B cell (primary cell): ENCODE measurements at regions of chr1 and their contacts with region 1.

Region 1: GRCh38 chr1:116020668-116021275 is 44.5 kb downstream of the SLC22A15 start:
- DNase-seq: peak; percentile 54
- ATAC-seq: peak; percentile 54
- H3K4me3 ChIP-seq: no peak overlapping the region
- H3K4me3 Mint-ChIP-seq: no peak overlapping the region
- H3K27ac ChIP-seq: no peak overlapping the region
- H3K27ac Mint-ChIP-seq: no peak overlapping the region
- H3K4me1 ChIP-seq: no peaks in the 10 kb centered on the region
- H3K4me1 Mint-ChIP-seq: peaks cover 2% of the 10 kb centered on the region
- H3K27me3 ChIP-seq: no peaks in the 10 kb centered on the region
- H3K27me3 Mint-ChIP-seq: no peaks in the 10 kb centered on the region
- CTCF ChIP-seq: peak; percentile 76

Region 2: DNA sequence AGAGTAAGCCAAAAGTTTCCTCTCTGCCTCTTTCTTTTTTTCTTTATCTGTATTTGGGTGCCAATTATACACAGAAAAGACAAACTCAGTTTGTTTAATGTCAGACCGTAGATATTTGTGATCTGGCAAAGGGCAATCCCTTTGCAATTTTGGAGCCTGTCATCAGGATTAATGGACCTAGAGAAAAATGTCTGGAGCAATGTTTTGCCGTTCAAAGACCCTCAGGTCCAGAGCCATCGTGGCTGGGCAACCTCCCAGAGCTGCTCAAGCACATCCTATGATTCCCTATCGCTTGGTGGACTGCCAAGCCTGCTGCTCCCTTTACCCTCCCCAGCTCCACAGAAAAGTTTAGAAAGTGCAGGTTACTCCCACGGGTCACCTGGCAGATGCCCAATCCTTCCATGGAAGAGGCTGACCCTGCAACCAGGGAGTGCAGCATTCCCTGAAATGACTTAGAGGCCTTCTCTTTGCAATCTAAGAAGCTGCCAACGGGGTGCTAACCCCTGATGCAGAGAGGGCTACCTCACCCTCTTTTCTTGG is 570.2 kb before region 1 on chr1:
- CTCF ChIA-PET with region 1: no interaction called
- POLR2A ChIA-PET with region 1: no interaction called
- intact Hi-C with region 1: no loop called
- DNase-seq: no peak
- ATAC-seq: no peak
- H3K4me3 ChIP-seq: no peak overlapping the region
- H3K4me3 Mint-ChIP-seq: no peak overlapping the region
- H3K27ac ChIP-seq: no peak overlapping the region
- H3K27ac Mint-ChIP-seq: no peak overlapping the region
- H3K4me1 ChIP-seq: no peaks in the 10 kb centered on the region
- H3K4me1 Mint-ChIP-seq: no peaks in the 10 kb centered on the region
- H3K27me3 ChIP-seq: no peaks in the 10 kb centered on the region
- H3K27me3 Mint-ChIP-seq: no peaks in the 10 kb centered on the region
- CTCF ChIP-seq: no peak

Region 3: DNA sequence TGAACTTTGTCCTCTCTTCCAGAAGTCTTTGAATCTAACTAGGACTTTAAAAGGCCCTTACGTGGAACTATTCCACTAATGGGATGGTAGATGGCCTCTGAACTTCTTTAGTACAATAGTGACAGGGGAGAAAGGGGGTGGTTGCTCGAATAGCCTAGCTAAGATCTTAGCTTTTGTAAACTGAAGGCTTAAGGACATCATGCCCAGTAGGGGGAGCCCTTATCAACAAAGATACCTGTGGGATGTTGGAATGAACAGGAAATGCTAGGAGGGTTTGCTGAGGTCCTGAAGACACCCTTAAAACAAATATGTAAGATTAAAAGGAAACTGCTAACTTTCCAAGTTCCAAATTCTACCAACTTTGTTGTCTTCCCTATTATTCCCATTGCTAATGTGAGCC is 213.0 kb before region 1 on chr1:
- CTCF ChIA-PET with region 1: interaction called, 22 read pairs
- POLR2A ChIA-PET with region 1: no interaction called
- intact Hi-C with region 1: loop called (anchors 2 kb)
- DNase-seq: peak; percentile 52
- ATAC-seq: no peak
- H3K4me3 ChIP-seq: no peak overlapping the region
- H3K4me3 Mint-ChIP-seq: no peak overlapping the region
- H3K27ac ChIP-seq: no peak overlapping the region
- H3K27ac Mint-ChIP-seq: no peak overlapping the region
- H3K4me1 ChIP-seq: no peaks in the 10 kb centered on the region
- H3K4me1 Mint-ChIP-seq: no peaks in the 10 kb centered on the region
- H3K27me3 ChIP-seq: no peaks in the 10 kb centered on the region
- H3K27me3 Mint-ChIP-seq: peaks cover 13% of the 10 kb centered on the region
- CTCF ChIP-seq: peak; percentile 73

Region 4: DNA sequence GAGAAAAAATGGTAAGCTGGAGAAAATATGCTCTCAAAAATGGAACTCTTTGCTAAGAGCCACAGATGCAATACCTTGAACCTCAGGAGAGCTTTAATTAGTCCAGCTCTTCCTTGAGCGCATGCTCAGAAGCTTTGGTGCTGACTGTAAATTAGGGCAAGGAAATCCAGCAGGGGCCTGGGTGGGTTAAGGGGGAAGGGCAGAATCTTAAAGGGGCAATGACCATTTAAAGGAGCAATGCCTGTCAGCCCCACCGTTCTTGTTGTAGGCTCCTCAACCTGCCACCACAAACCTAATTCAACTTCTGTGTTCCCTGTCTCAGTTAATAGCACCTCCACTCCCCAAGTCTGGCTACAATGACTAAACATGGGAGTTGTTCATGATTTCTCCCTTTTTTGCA is 51.3 kb before region 1 on chr1:
- CTCF ChIA-PET with region 1: no interaction called
- POLR2A ChIA-PET with region 1: no interaction called
- intact Hi-C with region 1: no loop called
- DNase-seq: no peak
- ATAC-seq: no peak
- H3K4me3 ChIP-seq: no peak overlapping the region
- H3K4me3 Mint-ChIP-seq: no peak overlapping the region
- H3K27ac ChIP-seq: no peak overlapping the region
- H3K27ac Mint-ChIP-seq: no peak overlapping the region
- H3K4me1 ChIP-seq: no peaks in the 10 kb centered on the region
- H3K4me1 Mint-ChIP-seq: no peaks in the 10 kb centered on the region
- H3K27me3 ChIP-seq: peaks cover 0 to 9% (median 3%) of the 10 kb centered on the region in 4 experiments
- H3K27me3 Mint-ChIP-seq: peaks cover 25% of the 10 kb centered on the region
- CTCF ChIP-seq: no peak

Region 5: GRCh38 chr1:116001739-116002487 is 18.9 kb before region 1 on chr1:
- CTCF ChIA-PET with region 1: interaction called, 10 read pairs
- POLR2A ChIA-PET with region 1: no interaction called
- intact Hi-C with region 1: no loop called
- DNase-seq: no peak
- ATAC-seq: no peak
- H3K4me3 ChIP-seq: no peak overlapping the region
- H3K4me3 Mint-ChIP-seq: no peak overlapping the region
- H3K27ac ChIP-seq: no peak overlapping the region
- H3K27ac Mint-ChIP-seq: no peak overlapping the region
- H3K4me1 ChIP-seq: peaks cover 11 to 26% of the 10 kb centered on the region in 2 donors
- H3K4me1 Mint-ChIP-seq: peaks cover 20% of the 10 kb centered on the region
- H3K27me3 ChIP-seq: no peaks in the 10 kb centered on the region
- H3K27me3 Mint-ChIP-seq: no peaks in the 10 kb centered on the region
- CTCF ChIP-seq: no peak

Region 6: DNA sequence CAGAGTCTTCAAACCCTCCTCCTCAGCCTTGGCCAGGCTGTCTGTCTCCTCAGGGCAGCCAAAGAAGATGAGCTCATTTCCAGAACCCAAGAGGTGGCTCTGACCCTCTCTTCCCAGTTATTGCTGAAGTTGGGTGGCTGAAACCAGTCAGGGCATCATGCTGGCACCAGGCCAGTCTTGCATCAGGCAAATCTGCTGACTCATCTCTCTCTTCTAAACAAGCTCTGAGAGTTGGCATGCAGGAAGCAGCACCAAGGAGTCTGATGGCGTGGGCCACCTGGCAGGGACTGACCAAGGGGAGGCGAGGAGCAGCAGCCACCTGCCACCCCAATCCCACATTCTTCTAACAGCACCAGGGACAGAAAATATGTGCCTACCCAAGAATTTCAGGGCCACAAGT is 247.4 kb after region 1 on chr1:
- CTCF ChIA-PET with region 1: no interaction called
- POLR2A ChIA-PET with region 1: no interaction called
- intact Hi-C with region 1: no loop called
- DNase-seq: no peak
- ATAC-seq: no peak
- H3K4me3 ChIP-seq: no peak overlapping the region
- H3K4me3 Mint-ChIP-seq: no peak overlapping the region
- H3K27ac ChIP-seq: no peak overlapping the region
- H3K27ac Mint-ChIP-seq: no peak overlapping the region
- H3K4me1 ChIP-seq: no peaks in the 10 kb centered on the region
- H3K4me1 Mint-ChIP-seq: no peaks in the 10 kb centered on the region
- H3K27me3 ChIP-seq: no peaks in the 10 kb centered on the region
- H3K27me3 Mint-ChIP-seq: peaks cover 6% of the 10 kb centered on the region
- CTCF ChIP-seq: no peak